Activated CD4-positive, alpha-beta T cell treated with anti-CD3 and anti-CD28 coated beads for 36 hours (primary cell): ENCODE measurements at regions of chr2 and their contacts with region 1.

Region 1: GRCh38 chr2:8544786-8545694 is 136.8 kb upstream of the ID2 start:
- DNase-seq: peak; percentile 96
- ATAC-seq: peak; percentile 66
- H3K4me3 Mint-ChIP-seq: no peak overlapping the region
- H3K27ac Mint-ChIP-seq: peak overlapping the region; percentile 99
- H3K4me1 Mint-ChIP-seq: peaks cover 77% of the 10 kb centered on the region
- H3K27me3 Mint-ChIP-seq: no peaks in the 10 kb centered on the region

Region 2: DNA sequence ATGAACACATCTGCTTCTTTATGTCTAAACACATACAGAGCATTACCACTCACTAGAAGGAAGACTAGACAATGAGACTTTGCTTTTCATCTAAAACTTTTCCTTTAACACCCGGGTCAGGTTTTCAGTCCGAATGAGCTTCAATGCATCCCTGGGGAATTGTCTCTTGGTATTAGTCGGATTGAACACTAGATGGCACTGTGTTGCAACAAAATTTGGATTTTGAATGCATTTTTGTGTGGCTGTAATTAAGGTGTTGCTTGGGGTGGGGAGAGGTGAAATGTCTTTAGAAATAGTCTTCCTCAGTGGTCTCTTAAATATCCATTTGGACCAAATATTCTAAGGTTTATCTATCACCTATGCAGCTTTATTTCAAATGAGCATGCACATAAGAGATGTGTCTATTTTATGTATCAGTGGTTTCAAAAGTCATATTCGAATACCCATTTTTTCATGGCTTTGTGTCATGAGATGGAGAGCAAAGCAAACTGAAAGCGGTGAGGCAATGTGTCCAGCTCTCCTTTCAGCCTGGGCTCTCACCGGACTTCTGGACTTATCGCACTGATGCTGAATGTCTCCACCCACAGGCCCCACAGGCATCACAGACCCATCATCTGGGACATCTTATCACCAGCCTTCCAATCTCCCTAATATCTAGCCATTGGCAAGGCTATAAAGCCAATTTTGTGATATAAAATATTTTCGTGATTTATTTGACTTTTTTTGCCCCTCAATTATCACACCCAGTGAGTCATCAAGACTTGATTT is 1117.6 kb before region 1 on chr2:
- CTCF ChIA-PET with region 1: no interaction called
- POLR2A ChIA-PET with region 1: no interaction called
- intact Hi-C with region 1: loop called (anchors 2 to 5 kb)
- DNase-seq: no peak
- ATAC-seq: no peak
- H3K4me3 Mint-ChIP-seq: no peak overlapping the region
- H3K27ac Mint-ChIP-seq: peak overlapping the region; percentile 51
- H3K4me1 Mint-ChIP-seq: peaks cover 41% of the 10 kb centered on the region
- H3K27me3 Mint-ChIP-seq: peaks cover 9% of the 10 kb centered on the region

Region 3: DNA sequence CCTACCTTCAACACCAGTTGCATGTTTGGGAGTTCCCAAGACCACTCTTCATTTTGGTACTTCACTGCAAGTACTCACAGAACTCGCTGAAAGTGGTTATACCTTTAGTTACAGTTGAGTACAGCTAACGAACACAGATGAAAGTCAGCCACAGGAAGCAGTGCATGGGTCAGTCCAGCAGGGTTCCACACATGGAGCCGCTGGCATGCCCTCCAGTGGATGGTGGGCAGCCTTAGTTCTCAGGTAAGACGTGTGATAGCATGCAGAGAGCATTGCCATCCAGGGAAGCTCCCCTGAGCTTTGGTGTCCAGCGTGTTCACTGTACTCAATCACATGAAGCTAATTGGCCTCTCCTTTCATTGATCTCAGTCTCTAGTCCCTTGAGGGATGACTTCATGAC is 812.5 kb before region 1 on chr2:
- CTCF ChIA-PET with region 1: no interaction called
- POLR2A ChIA-PET with region 1: no interaction called
- intact Hi-C with region 1: no loop called
- DNase-seq: no peak
- ATAC-seq: no peak
- H3K4me3 Mint-ChIP-seq: no peak overlapping the region
- H3K27ac Mint-ChIP-seq: no peak overlapping the region
- H3K4me1 Mint-ChIP-seq: peaks cover 14% of the 10 kb centered on the region
- H3K27me3 Mint-ChIP-seq: no peaks in the 10 kb centered on the region

Region 4: GRCh38 chr2:7825591-7826312 is 719.3 kb before region 1 on chr2:
- CTCF ChIA-PET with region 1: interaction called, 3 read pairs
- POLR2A ChIA-PET with region 1: interaction called, 5 read pairs
- intact Hi-C with region 1: loop called (anchors 1 kb)
- DNase-seq: peak; percentile 86
- ATAC-seq: peak; percentile 95
- H3K4me3 Mint-ChIP-seq: peak overlapping the region; percentile 26
- H3K27ac Mint-ChIP-seq: peak overlapping the region; percentile 93
- H3K4me1 Mint-ChIP-seq: peaks cover 27% of the 10 kb centered on the region
- H3K27me3 Mint-ChIP-seq: peaks cover 3% of the 10 kb centered on the region

Region 5: DNA sequence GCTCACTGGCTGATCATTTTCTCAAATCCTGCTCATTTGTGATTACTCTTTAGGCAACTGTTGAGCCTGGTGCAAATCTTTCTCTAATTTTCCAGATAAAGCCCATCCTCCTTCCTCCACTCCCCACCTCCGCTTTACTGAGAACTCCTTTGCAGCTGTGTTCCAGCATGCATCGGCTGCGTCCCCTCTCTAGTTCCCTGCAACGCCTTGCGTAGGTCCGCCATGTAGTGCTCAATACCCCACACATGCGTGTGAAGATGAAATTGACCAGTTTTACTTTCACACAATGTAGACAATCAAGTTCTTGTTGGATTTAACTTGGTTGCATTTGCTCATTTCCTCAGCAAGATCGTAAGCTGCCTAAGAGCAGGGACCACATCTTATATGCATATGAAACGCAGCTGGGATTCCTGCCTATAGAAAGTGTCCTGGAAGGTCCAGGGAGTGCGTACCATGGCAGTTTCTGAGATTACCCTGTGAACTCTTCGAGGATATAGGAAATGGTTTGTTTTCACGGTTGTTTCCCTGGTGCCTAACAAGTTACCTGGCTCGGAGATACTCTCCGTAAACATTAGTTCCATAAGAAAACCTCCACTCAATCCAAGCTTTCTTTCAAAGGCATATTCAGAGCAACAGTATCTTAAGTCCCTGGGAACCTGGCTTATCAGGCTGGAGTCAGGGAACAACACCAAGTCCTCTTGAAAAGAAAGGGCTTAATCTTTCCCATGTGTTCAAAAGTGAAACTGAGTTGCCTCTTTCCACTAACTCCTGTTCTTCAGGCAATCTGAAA is 629.5 kb before region 1 on chr2:
- CTCF ChIA-PET with region 1: no interaction called
- POLR2A ChIA-PET with region 1: no interaction called
- intact Hi-C with region 1: no loop called
- DNase-seq: no peak
- ATAC-seq: no peak
- H3K4me3 Mint-ChIP-seq: no peak overlapping the region
- H3K27ac Mint-ChIP-seq: no peak overlapping the region
- H3K4me1 Mint-ChIP-seq: no peaks in the 10 kb centered on the region
- H3K27me3 Mint-ChIP-seq: no peaks in the 10 kb centered on the region

Region 6: GRCh38 chr2:8049851-8050571 is 495.0 kb before region 1 on chr2:
- CTCF ChIA-PET with region 1: no interaction called
- POLR2A ChIA-PET with region 1: no interaction called
- intact Hi-C with region 1: loop called in 1 of 2 experiments (anchors 1 kb)
- DNase-seq: peak; percentile 87
- ATAC-seq: peak; percentile 97
- H3K4me3 Mint-ChIP-seq: peak overlapping the region; percentile 30
- H3K27ac Mint-ChIP-seq: peak overlapping the region; percentile 88
- H3K4me1 Mint-ChIP-seq: peaks cover 34% of the 10 kb centered on the region
- H3K27me3 Mint-ChIP-seq: peaks cover 5% of the 10 kb centered on the region

Region 7: DNA sequence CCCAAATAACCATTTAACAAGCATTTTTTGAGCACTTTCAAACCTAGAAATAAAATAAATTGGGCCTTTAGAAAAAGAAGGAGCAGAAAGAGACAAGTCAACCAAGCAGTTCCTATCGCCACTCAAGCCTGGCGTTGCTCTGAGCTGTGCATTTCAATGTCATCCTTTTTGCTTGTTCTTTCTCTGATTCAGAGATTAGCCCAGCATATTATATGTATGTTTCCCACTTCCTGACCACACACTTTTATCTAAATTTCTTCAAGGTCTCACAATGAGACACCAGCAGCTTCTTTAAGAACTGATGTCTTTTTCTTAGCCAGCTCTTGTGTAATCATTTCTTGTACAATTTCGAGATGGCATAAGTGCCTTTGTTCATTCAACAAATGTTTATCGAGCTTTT is 207.7 kb before region 1 on chr2:
- CTCF ChIA-PET with region 1: no interaction called
- POLR2A ChIA-PET with region 1: interaction called, 3 read pairs
- intact Hi-C with region 1: loop called in 1 of 2 experiments (anchors 1 kb)
- DNase-seq: peak; percentile 56
- ATAC-seq: peak; percentile 98
- H3K4me3 Mint-ChIP-seq: no peak overlapping the region
- H3K27ac Mint-ChIP-seq: peak overlapping the region; percentile 10
- H3K4me1 Mint-ChIP-seq: peaks cover 14% of the 10 kb centered on the region
- H3K27me3 Mint-ChIP-seq: no peaks in the 10 kb centered on the region

Region 8: GRCh38 chr2:8477552-8478470 is 67.2 kb before region 1 on chr2:
- CTCF ChIA-PET with region 1: interaction called, 14 read pairs
- POLR2A ChIA-PET with region 1: interaction called, 13 read pairs
- intact Hi-C with region 1: loop called (anchors 1 kb)
- DNase-seq: peak; percentile 45
- ATAC-seq: no peak
- H3K4me3 Mint-ChIP-seq: peak overlapping the region; percentile 49
- H3K27ac Mint-ChIP-seq: peak overlapping the region; percentile 89
- H3K4me1 Mint-ChIP-seq: peaks cover 77% of the 10 kb centered on the region
- H3K27me3 Mint-ChIP-seq: no peaks in the 10 kb centered on the region

Region 9: GRCh38 chr2:8574144-8575037 is 29.4 kb after region 1 on chr2:
- CTCF ChIA-PET with region 1: no interaction called
- POLR2A ChIA-PET with region 1: interaction called, 3 read pairs
- intact Hi-C with region 1: loop called (anchors 2 kb)
- DNase-seq: peak; percentile 23
- ATAC-seq: peak; percentile 30
- H3K4me3 Mint-ChIP-seq: peak overlapping the region; percentile 43
- H3K27ac Mint-ChIP-seq: no peak overlapping the region
- H3K4me1 Mint-ChIP-seq: peaks cover 40% of the 10 kb centered on the region
- H3K27me3 Mint-ChIP-seq: peaks cover 4% of the 10 kb centered on the region